CD4-positive, alpha-beta memory T cell (primary cell): ENCODE measurements at regions of chr2 and their contacts with region 1.

Region 1: DNA sequence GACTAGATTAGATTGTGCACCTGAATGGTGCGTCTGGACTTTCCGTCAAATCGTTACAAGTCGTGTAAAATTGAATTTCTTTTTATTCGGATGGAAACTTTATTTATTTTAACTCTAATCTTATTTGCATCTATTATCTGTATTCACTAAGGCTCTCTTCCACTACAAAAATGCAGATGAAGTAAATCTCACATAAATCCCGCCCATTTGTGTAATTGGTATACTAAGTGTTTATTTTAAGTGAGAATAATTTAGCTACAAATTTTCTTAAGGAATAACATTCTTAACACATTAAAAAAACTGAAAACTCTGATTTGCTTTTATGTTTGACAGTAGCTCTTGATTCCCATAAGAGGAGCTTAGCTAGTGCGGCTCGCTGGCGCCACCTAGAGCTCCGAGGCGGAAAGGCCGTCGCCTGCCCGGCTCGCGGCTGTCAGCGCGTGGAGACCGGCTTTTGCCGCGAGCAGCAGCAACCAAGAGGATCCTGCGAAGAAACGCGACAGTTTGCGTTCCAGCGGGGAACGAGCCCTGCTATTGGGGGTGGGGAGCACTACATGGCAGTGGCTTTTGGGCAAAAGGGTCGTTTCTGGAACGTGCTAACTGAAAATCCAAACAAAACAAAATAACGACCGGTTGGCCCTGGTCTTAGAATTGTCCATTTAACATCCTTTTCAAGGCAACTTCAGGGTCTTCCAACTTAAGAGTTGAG is 6.7 kb downstream of the SP9 start:
- DNase-seq: peak; percentile 83 to 89 (median 86)
- H3K4me3 ChIP-seq: peak overlapping the region in 1 of 2 donors; percentile 18
- H3K4me3 Mint-ChIP-seq: peak overlapping the region; percentile 13 to 95 (median 79)
- H3K27ac ChIP-seq: no peak overlapping the region
- H3K27ac Mint-ChIP-seq: peak overlapping the region in 6 of 7 donors; percentile 65 to 97 (median 88)
- H3K4me1 ChIP-seq: peaks cover 56% of the 10 kb centered on the region
- H3K4me1 Mint-ChIP-seq: peaks cover 18 to 48% (median 32%) of the 10 kb centered on the region in 4 donors
- H3K27me3 ChIP-seq: peaks cover 70% of the 10 kb centered on the region
- H3K27me3 Mint-ChIP-seq: peaks cover 47 to 51% of the 10 kb centered on the region in 2 donors

Region 2: DNA sequence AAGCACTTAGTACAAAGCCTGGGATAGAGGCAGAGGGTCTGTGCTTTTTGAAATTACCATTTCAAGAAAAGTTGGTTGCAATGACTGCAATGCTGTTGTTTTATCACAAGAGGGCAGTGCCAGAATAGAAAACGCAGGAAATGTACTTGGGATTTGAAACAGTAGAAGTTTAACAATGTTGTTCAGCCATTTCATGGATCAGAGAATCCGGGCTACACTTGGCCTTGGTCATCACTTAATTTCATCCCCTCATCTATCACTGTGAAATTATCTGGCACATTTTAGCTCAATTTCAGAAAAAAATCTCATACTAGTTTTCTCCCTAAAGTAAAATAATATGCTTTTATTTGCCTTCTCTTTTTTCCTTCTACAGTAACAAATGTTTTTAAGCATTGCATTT is 1534.9 kb before region 1 on chr2:
- CTCF ChIA-PET with region 1: no interaction called
- POLR2A ChIA-PET with region 1: no interaction called
- intact Hi-C with region 1: loop called (anchors 10 kb)
- DNase-seq: peak in 4 of 5 donors; percentile 4 to 9 (median 8)
- H3K4me3 ChIP-seq: no peak overlapping the region
- H3K4me3 Mint-ChIP-seq: no peak overlapping the region
- H3K27ac ChIP-seq: no peak overlapping the region
- H3K27ac Mint-ChIP-seq: no peak overlapping the region
- H3K4me1 ChIP-seq: no peaks in the 10 kb centered on the region
- H3K4me1 Mint-ChIP-seq: no peaks in the 10 kb centered on the region
- H3K27me3 ChIP-seq: no peaks in the 10 kb centered on the region
- H3K27me3 Mint-ChIP-seq: peaks cover 6 to 7% of the 10 kb centered on the region in 2 donors

Region 3: DNA sequence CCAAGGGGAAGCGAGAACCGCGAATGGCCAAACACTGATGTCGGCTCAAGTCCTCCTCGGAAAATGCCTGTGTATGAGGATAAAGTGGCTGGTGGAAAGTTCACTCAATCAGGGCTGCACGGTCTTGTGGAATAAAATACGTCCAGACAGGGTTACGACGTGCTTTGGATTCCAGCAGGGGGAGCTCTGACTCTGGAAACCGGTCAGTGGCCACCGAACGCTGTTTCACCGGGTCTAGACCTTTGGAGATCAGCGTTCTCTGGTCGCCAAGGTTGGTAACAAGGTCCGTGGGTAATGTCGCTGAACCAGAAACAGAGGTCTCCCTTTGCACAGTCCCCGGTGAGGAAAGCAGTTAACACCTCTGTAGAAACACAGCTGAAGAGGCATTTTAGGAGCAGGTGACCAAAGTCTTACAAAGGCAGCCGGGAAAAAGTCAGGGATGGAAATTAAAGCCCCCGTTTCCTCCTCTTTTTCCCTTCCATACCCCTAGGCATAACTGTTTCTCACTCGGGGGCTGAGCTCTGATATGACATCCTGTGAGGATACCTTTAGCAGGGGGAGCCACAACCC is 939.0 kb before region 1 on chr2:
- CTCF ChIA-PET with region 1: interaction called, 114 read pairs
- POLR2A ChIA-PET with region 1: interaction called, 6 read pairs
- intact Hi-C with region 1: loop called (anchors 1 kb)
- DNase-seq: peak; percentile 62 to 70 (median 68)
- H3K4me3 ChIP-seq: no peak overlapping the region
- H3K4me3 Mint-ChIP-seq: peak overlapping the region in 1 of 8 donors; percentile 17
- H3K27ac ChIP-seq: no peak overlapping the region
- H3K27ac Mint-ChIP-seq: peak overlapping the region in 1 of 7 donors; percentile 56
- H3K4me1 ChIP-seq: peaks cover 6% of the 10 kb centered on the region
- H3K4me1 Mint-ChIP-seq: peaks cover 0 to 6% (median 6%) of the 10 kb centered on the region in 4 donors
- H3K27me3 ChIP-seq: peaks cover 8% of the 10 kb centered on the region
- H3K27me3 Mint-ChIP-seq: peaks cover 31 to 55% of the 10 kb centered on the region in 2 donors

Region 4: DNA sequence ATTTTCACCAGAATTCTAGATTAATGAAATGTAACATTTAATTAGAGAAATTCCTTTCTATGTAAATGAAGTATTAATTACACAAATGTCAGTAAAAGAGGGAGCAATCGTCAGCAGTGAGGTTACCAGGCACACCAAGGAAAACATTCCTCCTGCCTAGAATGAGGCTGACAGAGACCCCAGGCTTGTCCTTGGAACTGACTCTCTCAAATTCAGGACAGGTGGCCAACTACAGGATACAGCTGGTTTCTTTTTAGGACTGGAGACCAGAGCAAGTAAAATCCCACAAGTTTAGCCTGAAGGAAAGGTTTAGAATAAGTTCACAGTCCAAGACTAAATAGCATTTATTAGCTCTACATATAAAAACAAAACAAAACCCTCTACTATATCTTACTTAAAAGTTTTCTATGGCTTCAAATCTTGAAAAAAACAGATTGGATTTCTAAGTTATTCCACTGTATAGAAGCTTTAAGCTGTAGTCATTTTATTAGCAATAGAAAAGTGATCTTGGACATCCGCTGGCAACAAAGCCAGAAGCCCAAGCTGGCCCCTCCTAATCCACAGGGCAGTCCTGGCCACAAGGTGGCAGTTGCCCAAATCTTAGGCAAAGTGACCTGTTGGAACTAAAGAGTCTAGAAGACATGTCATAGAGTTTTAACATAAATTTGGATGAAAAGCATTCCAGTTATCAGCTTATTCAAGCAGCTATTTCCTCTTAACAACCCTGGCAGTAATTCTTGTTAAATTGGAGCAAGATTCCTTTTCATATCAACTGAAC is 457.2 kb before region 1 on chr2:
- CTCF ChIA-PET with region 1: interaction called, 30 read pairs
- POLR2A ChIA-PET with region 1: no interaction called
- intact Hi-C with region 1: loop called (anchors 1 kb)
- DNase-seq: peak in 4 of 5 donors; percentile 20 to 24 (median 21)
- H3K4me3 ChIP-seq: no peak overlapping the region
- H3K4me3 Mint-ChIP-seq: no peak overlapping the region
- H3K27ac ChIP-seq: no peak overlapping the region
- H3K27ac Mint-ChIP-seq: no peak overlapping the region
- H3K4me1 ChIP-seq: no peaks in the 10 kb centered on the region
- H3K4me1 Mint-ChIP-seq: no peaks in the 10 kb centered on the region
- H3K27me3 ChIP-seq: no peaks in the 10 kb centered on the region
- H3K27me3 Mint-ChIP-seq: peaks cover 6 to 17% of the 10 kb centered on the region in 2 donors

Region 5: GRCh38 chr2:174158003-174158402 is 183.4 kb before region 1 on chr2:
- CTCF ChIA-PET with region 1: interaction called, 15 read pairs
- POLR2A ChIA-PET with region 1: no interaction called
- intact Hi-C with region 1: loop called (anchors 1 kb)
- DNase-seq: peak in 4 of 5 donors; percentile 2 to 8 (median 5)
- H3K4me3 ChIP-seq: no peak overlapping the region
- H3K4me3 Mint-ChIP-seq: no peak overlapping the region
- H3K27ac ChIP-seq: no peak overlapping the region
- H3K27ac Mint-ChIP-seq: no peak overlapping the region
- H3K4me1 ChIP-seq: no peaks in the 10 kb centered on the region
- H3K4me1 Mint-ChIP-seq: peaks cover 0 to 9% (median 5%) of the 10 kb centered on the region in 4 donors
- H3K27me3 ChIP-seq: no peaks in the 10 kb centered on the region
- H3K27me3 Mint-ChIP-seq: no peaks in the 10 kb centered on the region

Region 6: GRCh38 chr2:176096986-176097819 is 1755.8 kb after region 1 on chr2:
- CTCF ChIA-PET with region 1: no interaction called
- POLR2A ChIA-PET with region 1: no interaction called
- intact Hi-C with region 1: loop called (anchors 5 kb)
- DNase-seq: peak in 4 of 5 donors; percentile 56 to 61 (median 56)
- H3K4me3 ChIP-seq: peak overlapping the region; percentile 1 to 54
- H3K4me3 Mint-ChIP-seq: peak overlapping the region; percentile 51 to 87 (median 82)
- H3K27ac ChIP-seq: no peak overlapping the region
- H3K27ac Mint-ChIP-seq: peak overlapping the region in 3 of 7 donors; percentile 3 to 83 (median 42)
- H3K4me1 ChIP-seq: peaks cover 27% of the 10 kb centered on the region
- H3K4me1 Mint-ChIP-seq: peaks cover 12 to 39% (median 28%) of the 10 kb centered on the region in 4 donors
- H3K27me3 ChIP-seq: peaks cover 78% of the 10 kb centered on the region
- H3K27me3 Mint-ChIP-seq: peaks cover 77 to 78% of the 10 kb centered on the region in 2 donors